ENCODE measurements at regions of chr3 and their contacts with region 1.

Region 1: GRCh38 chr3:119463171-119464169 is at the start of gene TMEM39A:
- DNase-seq: peak; percentile 99
- H3K4me3 Mint-ChIP-seq: peak within 1 kb of the TSS; percentile 97
- H3K27ac Mint-ChIP-seq: peak within 1 kb of the TSS; percentile 98
- H3K4me1 Mint-ChIP-seq: peaks cover 41% of the 10 kb centered on the region
- H3K27me3 Mint-ChIP-seq: no peaks in the 10 kb centered on the region
- total RNA-seq, gene TMEM39A: 33.9 to 34.3 TPM

Region 2: DNA sequence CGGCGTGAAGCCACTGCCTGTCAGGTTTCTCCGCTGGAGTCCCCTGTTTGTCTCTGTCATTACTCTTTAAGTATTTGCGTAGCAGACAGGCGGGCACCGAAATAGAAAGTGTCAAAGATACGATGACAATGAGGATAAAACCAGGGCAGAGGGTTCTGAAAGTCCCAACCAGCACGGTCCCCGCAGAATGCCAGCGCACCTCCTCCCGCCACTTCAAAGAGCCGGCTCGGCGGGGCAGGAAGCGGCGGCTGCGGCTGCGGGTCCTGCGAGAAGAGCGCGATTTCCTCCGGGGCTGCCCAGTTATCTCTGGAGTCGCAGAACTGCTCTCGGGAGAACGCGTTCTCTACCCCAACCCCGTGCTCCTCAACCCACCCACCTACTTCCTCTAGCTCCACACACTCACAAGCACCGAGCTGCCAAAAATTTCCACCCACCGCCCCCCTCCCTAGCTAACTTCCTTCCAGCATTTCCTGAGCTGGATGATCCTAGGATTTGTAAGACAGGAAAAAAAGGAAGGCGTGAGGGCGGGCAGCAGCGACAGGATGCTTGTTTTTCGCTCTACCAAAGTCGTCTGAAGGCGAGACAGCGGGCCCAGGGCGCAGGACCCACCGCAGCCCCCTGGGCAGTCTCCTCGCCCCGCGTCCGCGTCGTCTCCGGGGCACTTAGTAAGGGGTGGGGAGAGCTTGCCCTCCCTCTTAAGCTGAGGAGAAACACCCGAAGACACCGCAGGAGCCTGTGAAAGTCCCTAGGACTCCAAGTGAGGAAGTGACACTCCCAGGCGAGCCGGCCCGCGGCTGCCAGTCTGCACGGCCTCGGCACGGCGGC is 169.4 kb before region 1 on chr3 and contains the start of gene ARHGAP31:
- CTCF ChIA-PET with region 1: no interaction called
- POLR2A ChIA-PET with region 1: interaction called, 24 read pairs
- intact Hi-C with region 1: loop called (anchors 1 kb)
- DNase-seq: peak; percentile 95
- H3K4me3 Mint-ChIP-seq: peak within 1 kb of the TSS; percentile 83
- H3K27ac Mint-ChIP-seq: peak within 1 kb of the TSS; percentile 93
- H3K4me1 Mint-ChIP-seq: peaks cover 44% of the 10 kb centered on the region
- H3K27me3 Mint-ChIP-seq: no peaks in the 10 kb centered on the region
- total RNA-seq, gene ARHGAP31: 10.8 to 11.4 TPM

Region 3: DNA sequence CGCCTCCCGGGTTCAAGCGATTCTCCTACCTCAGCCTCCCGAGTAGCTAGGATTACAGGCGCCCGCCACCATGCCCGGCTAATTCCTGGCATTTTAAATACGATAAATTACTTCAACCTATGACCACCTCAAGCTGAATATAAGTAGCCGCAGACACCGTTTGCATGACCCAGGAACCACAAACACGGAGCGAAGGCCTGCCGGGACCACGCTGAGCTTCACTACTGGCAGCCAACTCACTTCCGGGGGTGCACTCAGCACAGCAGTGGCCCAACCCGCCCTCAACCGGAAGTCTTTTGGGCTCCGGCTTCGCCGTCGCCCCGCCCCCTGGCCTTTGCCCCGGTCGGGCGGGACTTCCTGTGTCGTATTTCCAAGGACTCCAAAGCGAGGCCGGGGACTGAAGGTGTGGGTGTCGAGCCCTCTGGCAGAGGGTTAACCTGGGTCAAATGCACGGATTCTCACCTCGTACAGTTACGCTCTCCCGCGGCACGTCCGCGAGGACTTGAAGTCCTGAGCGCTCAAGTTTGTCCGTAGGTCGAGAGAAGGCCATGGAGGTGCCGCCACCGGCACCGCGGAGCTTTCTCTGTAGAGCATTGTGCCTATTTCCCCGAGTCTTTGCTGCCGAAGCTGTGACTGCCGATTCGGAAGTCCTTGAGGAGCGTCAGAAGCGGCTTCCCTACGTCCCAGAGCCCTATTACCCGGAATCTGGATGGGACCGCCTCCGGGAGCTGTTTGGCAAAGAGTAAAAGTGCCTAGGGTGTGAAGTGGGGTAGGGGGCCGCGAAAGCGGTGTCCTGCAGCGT is 34.9 kb after region 1 on chr3 and contains the start of gene TIMMDC1:
- CTCF ChIA-PET with region 1: interaction called, 4 read pairs
- POLR2A ChIA-PET with region 1: interaction called, 42 read pairs
- intact Hi-C with region 1: loop called (anchors 1 kb)
- DNase-seq: peak; percentile 98
- H3K4me3 Mint-ChIP-seq: peak within 1 kb of the TSS; percentile 98
- H3K27ac Mint-ChIP-seq: peak within 1 kb of the TSS; percentile 96
- H3K4me1 Mint-ChIP-seq: peaks cover 29% of the 10 kb centered on the region
- H3K27me3 Mint-ChIP-seq: no peaks in the 10 kb centered on the region
- total RNA-seq, gene TIMMDC1: 93.7 to 105 TPM

Region 4: DNA sequence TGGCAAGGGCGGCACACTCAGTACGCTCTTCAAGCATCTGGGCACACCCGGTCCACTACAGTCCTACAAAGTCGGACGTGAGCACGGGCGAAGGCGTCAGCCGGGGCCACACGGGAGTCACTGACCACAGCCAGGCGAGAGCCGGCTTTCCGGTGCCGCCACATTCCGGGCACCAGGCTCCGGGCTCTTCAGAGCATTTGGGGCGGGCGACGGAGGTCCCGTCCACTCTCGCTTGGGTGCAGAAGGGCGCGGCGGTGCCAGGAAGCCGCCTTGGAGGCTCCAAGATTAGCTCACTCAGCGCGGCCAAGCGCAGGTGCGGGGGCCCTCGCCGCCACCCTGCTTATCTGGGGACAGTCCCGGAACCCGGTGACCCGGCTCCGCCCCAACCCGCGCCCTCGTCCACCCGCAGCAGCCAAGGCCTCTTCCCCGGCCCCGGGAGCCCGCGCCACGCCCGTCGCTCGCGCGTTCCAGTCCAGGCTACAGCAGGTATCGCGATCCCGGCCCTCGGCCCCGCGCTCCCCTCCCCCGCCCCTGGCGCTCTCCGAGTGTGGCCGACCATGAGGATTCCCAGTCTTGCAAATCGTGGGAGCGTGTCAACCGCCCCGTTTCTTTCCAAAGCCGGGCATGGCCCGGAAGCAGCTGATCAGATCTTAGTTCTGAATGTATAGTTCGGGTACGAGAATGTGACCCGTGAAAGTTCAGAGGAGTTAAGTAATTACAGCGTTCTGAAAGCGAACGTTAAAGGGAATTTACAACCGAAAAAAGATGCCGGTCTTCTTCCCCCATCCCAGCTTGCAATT is 116.1 kb after region 1 on chr3 and contains the start of gene ADPRH:
- CTCF ChIA-PET with region 1: no interaction called
- POLR2A ChIA-PET with region 1: no interaction called
- intact Hi-C with region 1: loop called (anchors 5 kb)
- DNase-seq: peak; percentile 77
- H3K4me3 Mint-ChIP-seq: peak within 1 kb of the TSS; percentile 74
- H3K27ac Mint-ChIP-seq: peak within 1 kb of the TSS; percentile 61
- H3K4me1 Mint-ChIP-seq: peaks cover 26% of the 10 kb centered on the region
- H3K27me3 Mint-ChIP-seq: peaks cover 3% of the 10 kb centered on the region
- total RNA-seq, gene ADPRH: 7.7 to 8.6 TPM

Region 5: DNA sequence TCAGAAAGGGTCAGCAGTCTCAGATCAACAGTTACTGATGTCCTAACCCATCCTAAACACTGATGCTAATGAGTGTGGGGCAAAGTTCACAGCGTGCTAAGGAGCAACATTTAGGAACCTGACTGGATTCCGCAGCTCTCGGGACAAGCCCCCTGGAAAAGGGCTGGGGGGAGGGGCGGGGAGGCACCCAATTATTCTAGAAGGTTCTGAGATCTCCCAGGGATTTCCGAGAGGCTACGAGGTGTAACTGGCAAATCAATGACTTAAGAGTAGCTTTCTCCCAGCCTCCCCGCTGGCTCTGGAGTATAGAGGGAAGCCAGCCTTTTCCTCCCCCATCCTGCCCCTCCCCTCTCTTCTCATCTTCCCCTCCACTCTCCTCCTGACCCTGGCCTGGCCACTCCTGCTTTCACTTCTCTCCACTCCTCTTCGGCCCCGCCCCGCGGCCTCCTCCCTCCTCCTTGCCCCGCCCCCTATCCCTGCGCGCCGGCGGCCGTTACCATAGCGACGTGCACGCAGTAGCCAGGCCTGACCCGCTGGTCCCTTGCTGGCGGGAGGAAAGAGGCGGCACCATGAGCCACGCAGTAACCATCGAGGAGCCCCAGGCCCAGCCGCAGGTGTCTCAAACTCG is 239.2 kb after region 1 on chr3 and contains the start of gene CFAP91:
- CTCF ChIA-PET with region 1: no interaction called
- POLR2A ChIA-PET with region 1: no interaction called
- intact Hi-C with region 1: loop called (anchors 1 kb)
- DNase-seq: peak; percentile 92
- H3K4me3 Mint-ChIP-seq: peak within 1 kb of the TSS; percentile 74
- H3K27ac Mint-ChIP-seq: no peak within 1 kb of the TSS
- H3K4me1 Mint-ChIP-seq: peaks cover 43% of the 10 kb centered on the region
- H3K27me3 Mint-ChIP-seq: no peaks in the 10 kb centered on the region
- total RNA-seq, gene CFAP91: 0.29 to 0.31 TPM

Region 6: GRCh38 chr3:119930286-119930685 is 466.8 kb after region 1 on chr3:
- CTCF ChIA-PET with region 1: no interaction called
- POLR2A ChIA-PET with region 1: no interaction called
- intact Hi-C with region 1: no loop called
- DNase-seq: no peak
- H3K4me3 Mint-ChIP-seq: no peak overlapping the region
- H3K27ac Mint-ChIP-seq: no peak overlapping the region
- H3K4me1 Mint-ChIP-seq: peaks cover 10% of the 10 kb centered on the region
- H3K27me3 Mint-ChIP-seq: no peaks in the 10 kb centered on the region